ENCODE measurements at regions of chr5 and their contacts with region 1.

Region 1: DNA sequence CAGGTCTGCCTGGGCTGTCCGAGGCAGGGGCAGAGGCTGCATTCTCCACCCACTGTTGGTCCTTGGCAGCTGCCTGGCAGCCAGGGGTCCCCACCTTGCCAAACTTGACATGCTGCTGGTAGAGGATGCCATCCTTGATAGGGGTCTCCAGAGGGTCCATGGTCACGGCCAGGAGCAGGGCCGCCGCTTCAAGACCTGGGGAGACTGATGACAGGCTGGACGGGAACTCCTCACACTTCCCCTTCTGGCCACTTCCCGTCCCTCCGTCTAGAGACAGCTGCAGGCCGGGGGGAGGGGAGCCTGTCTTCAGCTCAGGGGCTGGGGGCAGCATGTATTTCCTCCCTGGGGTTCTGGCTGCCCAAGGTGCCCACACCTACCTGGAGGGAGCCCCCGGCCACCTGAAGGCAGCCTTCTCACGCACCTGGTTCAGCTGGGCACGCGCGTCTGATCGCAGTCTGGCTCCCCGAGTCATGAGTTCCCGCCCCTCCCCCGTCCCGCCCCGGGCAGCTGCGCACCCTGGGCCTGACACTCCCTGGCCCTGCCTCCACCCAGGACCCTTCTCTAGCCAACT is at the start of gene DOK3:
- DNase-seq: peak; percentile 82
- H3K4me3 ChIP-seq: peak within 1 kb of the TSS; percentile 77
- H3K27ac ChIP-seq: peak within 1 kb of the TSS; percentile 95
- H3K4me1 ChIP-seq: peaks cover 61% of the 10 kb centered on the region
- CTCF ChIP-seq: no peak
- total RNA-seq, gene DOK3: 186 and 197 TPM in 2 replicates

Region 2: DNA sequence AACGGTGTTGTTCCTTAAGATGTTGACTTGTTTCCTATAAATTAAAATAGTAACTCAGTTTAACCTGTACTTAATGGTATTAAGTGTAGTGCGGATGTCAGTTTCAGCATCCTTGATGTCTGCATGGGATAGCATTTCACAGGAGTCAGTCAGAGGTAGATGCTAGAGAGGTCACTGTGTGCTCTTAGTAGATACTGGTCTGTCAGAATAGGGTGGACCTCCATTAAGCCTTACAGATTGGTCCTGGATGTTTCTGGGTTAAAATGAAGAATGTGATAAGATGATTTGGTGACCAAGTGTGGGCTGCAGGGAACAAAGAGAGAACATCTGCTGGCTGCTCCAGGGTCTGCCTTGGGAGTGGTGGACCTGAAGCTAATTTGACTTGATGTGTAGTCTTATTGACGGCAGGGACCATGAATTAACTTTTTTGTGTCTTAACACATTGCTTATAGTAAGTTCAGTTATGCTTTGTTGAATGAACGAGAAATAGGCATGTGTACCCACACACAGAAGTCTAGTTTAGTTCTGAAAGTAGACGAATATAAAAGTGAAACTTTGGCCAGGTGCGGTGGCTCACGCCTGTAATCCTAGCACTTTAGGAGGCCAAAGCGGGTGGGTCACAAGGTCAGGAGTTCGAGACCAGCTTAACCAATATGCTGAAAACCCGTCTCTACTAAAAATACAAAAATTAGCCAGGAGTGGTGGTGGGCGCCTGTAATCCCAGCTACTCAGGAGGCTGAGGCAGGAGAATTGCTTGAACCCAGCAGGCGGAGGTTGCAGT is 218.5 kb before region 1 on chr5:
- CTCF ChIA-PET with region 1: no interaction called
- POLR2A ChIA-PET with region 1: no interaction called
- intact Hi-C with region 1: no loop called
- DNase-seq: peak; percentile 85
- H3K4me3 ChIP-seq: peak overlapping the region; percentile 37
- H3K27ac ChIP-seq: peak overlapping the region; percentile 93
- H3K4me1 ChIP-seq: peaks cover 29% of the 10 kb centered on the region
- CTCF ChIP-seq: no peak

Region 3: DNA sequence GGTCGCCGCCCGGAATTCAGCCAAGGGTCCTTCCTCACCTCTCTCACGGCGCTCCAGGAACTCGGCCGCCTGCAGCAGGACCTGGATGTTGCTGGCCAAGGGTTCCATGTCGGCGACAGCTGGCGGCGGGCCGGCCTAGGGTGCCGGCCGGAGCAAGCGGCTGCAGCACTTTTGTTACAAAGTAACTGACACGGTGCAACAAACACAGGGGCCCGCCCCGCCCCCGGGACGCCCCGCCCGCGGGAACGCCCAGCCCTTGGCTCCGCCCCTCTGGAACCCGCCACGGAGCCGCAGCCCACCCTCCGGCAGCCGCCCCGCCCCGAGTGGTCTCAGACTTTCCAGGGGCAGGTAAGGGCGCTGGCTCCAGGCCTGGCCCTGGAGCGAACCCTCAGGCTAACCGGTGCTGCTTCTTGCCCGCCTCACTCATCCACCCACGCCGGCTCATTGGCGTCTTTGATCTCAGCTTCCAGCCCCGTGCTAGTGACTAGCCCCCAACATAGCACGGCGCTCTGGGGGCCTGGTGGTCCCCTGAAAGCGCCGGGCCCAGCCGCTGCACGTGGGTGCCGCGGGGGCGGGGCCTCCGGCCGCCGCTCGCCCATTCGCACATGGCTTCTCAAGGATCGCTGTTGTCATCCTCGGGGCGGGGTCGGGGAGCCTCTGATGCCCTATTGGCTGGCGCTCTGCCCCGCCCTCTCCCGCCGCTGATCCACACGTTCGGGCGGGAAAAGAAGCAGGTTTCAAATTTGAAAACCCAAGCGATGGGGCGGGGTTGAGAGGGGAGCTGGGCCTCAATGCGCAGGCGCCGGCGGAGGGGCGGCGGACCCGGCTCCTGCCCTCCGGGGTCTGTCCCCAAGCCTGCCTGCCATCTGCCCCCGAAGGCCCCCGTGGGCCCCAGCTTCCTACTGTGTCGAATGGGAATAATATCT is 197.5 kb before region 1 on chr5 and contains the start of gene MXD3:
- CTCF ChIA-PET with region 1: no interaction called
- POLR2A ChIA-PET with region 1: interaction called, 3 read pairs
- intact Hi-C with region 1: loop called (anchors 5 kb)
- DNase-seq: peak; percentile 99
- H3K4me3 ChIP-seq: peak within 1 kb of the TSS; percentile 94
- H3K27ac ChIP-seq: peak within 1 kb of the TSS; percentile 92
- H3K4me1 ChIP-seq: peaks cover 51% of the 10 kb centered on the region
- CTCF ChIP-seq: no peak
- total RNA-seq, gene MXD3: 109 and 130 TPM in 2 replicates

Region 4: GRCh38 chr5:177497292-177498033 is 12.0 kb before region 1 on chr5 and contains the start of gene PDLIM7:
- CTCF ChIA-PET with region 1: interaction called, 5 read pairs
- POLR2A ChIA-PET with region 1: interaction called, 24 read pairs
- intact Hi-C with region 1: no loop called
- DNase-seq: peak; percentile 96
- H3K4me3 ChIP-seq: peak within 1 kb of the TSS; percentile 81
- H3K27ac ChIP-seq: peak within 1 kb of the TSS; percentile 29
- H3K4me1 ChIP-seq: peaks cover 60% of the 10 kb centered on the region
- CTCF ChIP-seq: no peak
- total RNA-seq, gene PDLIM7: 38.8 and 41.4 TPM in 2 replicates

Region 5: DNA sequence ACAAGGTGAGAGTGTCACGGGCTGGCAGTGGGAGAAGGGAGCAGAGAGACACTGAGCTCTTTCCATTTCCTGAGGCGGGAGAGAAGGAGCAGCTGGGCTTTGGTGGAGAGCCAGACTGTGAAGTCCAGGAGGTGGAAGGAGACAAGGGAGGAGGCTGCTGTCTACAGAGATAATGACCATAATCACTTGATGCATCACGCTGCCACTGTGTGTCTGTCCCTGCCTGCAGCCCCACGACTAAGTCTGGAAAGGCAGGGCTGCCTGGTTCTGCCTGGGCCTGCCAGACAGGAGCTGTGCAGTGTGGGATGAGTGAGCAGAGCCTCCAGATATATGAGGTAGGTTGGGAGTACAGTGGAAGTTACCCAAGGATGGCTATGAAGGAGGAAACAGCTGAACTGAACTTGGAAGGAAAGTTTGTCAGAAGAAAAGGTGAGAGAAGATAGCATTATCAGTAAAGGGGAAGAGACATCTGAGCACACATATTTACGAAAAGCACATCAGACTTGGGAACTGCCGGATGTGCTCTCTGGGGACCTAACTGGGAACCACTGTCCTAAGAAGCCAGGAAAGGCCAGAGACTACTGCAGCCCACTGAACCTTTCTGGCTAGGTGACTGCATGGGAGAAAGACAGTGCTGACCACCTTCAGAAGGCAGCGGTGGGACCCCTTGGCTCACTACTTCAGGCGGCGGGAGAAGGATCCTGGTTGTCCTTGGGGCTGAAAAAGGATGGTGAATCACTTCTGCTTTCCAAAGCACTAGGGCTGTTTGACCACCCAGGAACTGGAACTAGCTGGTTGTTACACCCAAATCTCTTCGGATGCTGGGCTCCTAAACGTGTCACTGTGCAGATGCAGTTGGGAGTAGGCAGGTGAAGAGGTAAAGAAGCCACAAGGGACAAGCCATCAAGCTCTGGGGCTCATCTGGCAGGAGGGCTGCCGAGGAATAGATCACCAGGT is 20.1 kb after region 1 on chr5:
- CTCF ChIA-PET with region 1: no interaction called
- POLR2A ChIA-PET with region 1: no interaction called
- intact Hi-C with region 1: no loop called
- DNase-seq: no peak
- H3K4me3 ChIP-seq: no peak overlapping the region
- H3K27ac ChIP-seq: no peak overlapping the region
- H3K4me1 ChIP-seq: no peaks in the 10 kb centered on the region
- CTCF ChIP-seq: no peak

Region 6: DNA sequence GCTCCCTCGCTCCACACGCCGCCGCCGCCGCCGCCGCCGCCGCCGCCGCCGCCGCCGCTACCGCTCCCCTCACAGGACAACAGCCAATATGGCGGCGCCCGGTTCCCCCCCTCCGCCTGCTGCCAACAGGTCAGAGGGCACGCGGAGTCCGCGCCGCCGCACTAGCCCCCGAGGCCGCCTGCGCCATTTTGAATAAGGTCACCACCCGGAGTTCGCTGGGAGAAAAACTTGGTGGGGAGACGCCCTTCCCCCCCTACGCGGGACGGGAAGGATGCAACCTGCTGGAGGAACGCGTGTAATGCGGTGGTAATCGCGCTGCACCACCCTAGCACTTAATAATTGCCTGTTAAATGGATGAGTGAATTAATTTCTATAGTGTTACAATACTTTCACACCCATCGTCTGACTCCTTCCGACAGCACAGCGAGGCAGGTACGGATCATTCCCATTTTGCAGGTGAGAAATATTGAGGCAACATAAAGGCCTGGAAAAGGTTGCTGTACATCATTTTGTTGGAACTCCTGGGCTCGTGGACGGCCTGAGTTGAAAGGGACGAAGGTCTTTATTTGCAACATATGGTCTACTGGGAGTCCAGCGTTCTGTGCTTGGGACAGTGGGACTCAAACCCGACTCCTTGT is 45.1 kb after region 1 on chr5 and contains the start of gene FAM193B:
- CTCF ChIA-PET with region 1: no interaction called
- POLR2A ChIA-PET with region 1: no interaction called
- intact Hi-C with region 1: loop called (anchors 2 kb)
- DNase-seq: peak; percentile 92
- H3K4me3 ChIP-seq: peak within 1 kb of the TSS; percentile 92
- H3K27ac ChIP-seq: peak within 1 kb of the TSS; percentile 25
- H3K4me1 ChIP-seq: peaks cover 15% of the 10 kb centered on the region
- CTCF ChIP-seq: peak; percentile 48
- total RNA-seq, gene FAM193B: 63.2 and 92.8 TPM in 2 replicates

Region 7: DNA sequence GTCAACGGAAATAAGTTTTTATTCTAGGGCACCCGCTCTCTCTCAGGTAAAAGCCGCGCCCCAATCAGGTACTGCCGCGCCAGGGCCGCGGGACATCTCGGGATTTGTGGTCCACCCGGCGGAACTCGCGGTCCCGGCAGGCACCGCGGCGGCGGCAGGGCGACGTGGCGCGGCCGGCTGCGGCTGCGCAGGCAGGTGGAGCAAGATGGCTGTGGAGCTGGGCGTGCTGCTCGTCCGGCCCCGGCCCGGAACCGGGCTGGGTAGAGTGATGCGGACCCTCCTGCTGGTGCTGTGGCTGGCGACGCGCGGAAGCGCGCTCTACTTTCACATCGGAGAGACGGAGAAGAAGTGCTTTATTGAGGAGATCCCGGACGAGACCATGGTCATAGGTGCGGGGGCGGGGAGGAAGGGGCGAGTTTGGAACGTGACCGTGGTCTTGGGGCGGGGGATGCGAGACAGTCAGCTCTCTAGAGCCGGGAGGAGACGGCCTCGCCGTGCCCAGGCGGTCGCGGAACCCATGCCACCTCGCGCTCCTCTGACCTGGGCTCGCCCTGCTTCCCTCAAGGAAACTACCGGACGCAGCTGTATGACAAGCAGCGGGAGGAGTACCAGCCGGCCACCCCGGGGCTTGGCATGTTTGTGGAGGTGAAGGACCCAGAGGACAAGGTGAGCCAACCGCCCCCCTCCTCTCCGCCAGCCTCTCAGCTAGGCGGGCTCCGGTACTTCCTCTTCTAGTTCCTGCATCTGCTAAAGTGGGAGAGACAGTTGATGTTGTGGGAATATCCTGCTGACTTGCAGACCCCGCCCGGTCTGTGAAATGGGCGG is 82.8 kb after region 1 on chr5 and contains the start of gene TMED9:
- CTCF ChIA-PET with region 1: interaction called, 3 read pairs
- POLR2A ChIA-PET with region 1: interaction called, 3 read pairs
- intact Hi-C with region 1: loop called (anchors 2 kb)
- DNase-seq: peak; percentile 90
- H3K4me3 ChIP-seq: peak within 1 kb of the TSS; percentile 91
- H3K27ac ChIP-seq: peak within 1 kb of the TSS; percentile 73
- H3K4me1 ChIP-seq: peaks cover 16% of the 10 kb centered on the region
- CTCF ChIP-seq: no peak
- total RNA-seq, gene TMED9: 67.6 and 89.7 TPM in 2 replicates